Activated B cell treated with CpG ODN at 0.5 μM for 24 hours (primary cell): ENCODE measurements at regions of chr15 and their contacts with region 1.

Region 1: GRCh38 chr15:43808960-43809678 is 8.7 kb downstream of the HYPK start:
- DNase-seq: no peak
- ATAC-seq: peak; percentile 90
- H3K4me3 Mint-ChIP-seq: peak overlapping the region; percentile 62
- H3K27ac Mint-ChIP-seq: peak overlapping the region; percentile 85
- H3K4me1 Mint-ChIP-seq: peaks cover 28% of the 10 kb centered on the region
- H3K27me3 Mint-ChIP-seq: no peaks in the 10 kb centered on the region
- CTCF ChIP-seq: no peak

Region 2: GRCh38 chr15:43791993-43792760 is 16.9 kb before region 1 on chr15 and contains the start of gene SERF2:
- CTCF ChIA-PET with region 1: interaction called, 3 read pairs
- POLR2A ChIA-PET with region 1: interaction called, 55 read pairs
- intact Hi-C with region 1: loop called (anchors 1 kb)
- DNase-seq: peak; percentile 96
- ATAC-seq: peak; percentile 88
- H3K4me3 Mint-ChIP-seq: peak within 1 kb of the TSS; percentile 98
- H3K27ac Mint-ChIP-seq: peak within 1 kb of the TSS; percentile 97
- H3K4me1 Mint-ChIP-seq: peaks cover 79% of the 10 kb centered on the region
- H3K27me3 Mint-ChIP-seq: no peaks in the 10 kb centered on the region
- CTCF ChIP-seq: no peak
- total RNA-seq, gene SERF2: 601 and 656 TPM in 2 replicates